ENCODE measurements at regions of chr3 and their contacts with region 1.

Region 1: GRCh38 chr3:118884748-118885206 is 149.9 kb downstream of the IGSF11 start:
- DNase-seq: peak; percentile 50 to 85 (median 76)
- ATAC-seq: peak; percentile 86
- H3K4me3 ChIP-seq: no peak overlapping the region
- H3K4me3 Mint-ChIP-seq: no peak overlapping the region
- H3K27ac ChIP-seq: no peak overlapping the region
- H3K27ac Mint-ChIP-seq: no peak overlapping the region
- H3K4me1 ChIP-seq: no peaks in the 10 kb centered on the region
- H3K4me1 Mint-ChIP-seq: peaks cover 7% of the 10 kb centered on the region
- H3K27me3 ChIP-seq: peaks cover 0 to 3% of the 10 kb centered on the region in 2 experiments
- H3K27me3 Mint-ChIP-seq: peaks cover 21% of the 10 kb centered on the region
- CTCF ChIP-seq: peak; percentile 99

Region 2: GRCh38 chr3:118828351-118828750 is 56.4 kb before region 1 on chr3:
- CTCF ChIA-PET with region 1: no interaction called
- POLR2A ChIA-PET with region 1: no interaction called
- intact Hi-C with region 1: no loop called
- DNase-seq: no peak
- ATAC-seq: no peak
- H3K4me3 ChIP-seq: no peak overlapping the region
- H3K4me3 Mint-ChIP-seq: no peak overlapping the region
- H3K27ac ChIP-seq: no peak overlapping the region
- H3K27ac Mint-ChIP-seq: no peak overlapping the region
- H3K4me1 ChIP-seq: no peaks in the 10 kb centered on the region
- H3K4me1 Mint-ChIP-seq: no peaks in the 10 kb centered on the region
- H3K27me3 ChIP-seq: no peaks in the 10 kb centered on the region
- H3K27me3 Mint-ChIP-seq: peaks cover 8% of the 10 kb centered on the region
- CTCF ChIP-seq: no peak

Region 3: GRCh38 chr3:118868051-118868450 is 16.7 kb before region 1 on chr3:
- CTCF ChIA-PET with region 1: interaction called, 58 read pairs
- POLR2A ChIA-PET with region 1: no interaction called
- intact Hi-C with region 1: no loop called
- DNase-seq: no peak
- ATAC-seq: no peak
- H3K4me3 ChIP-seq: no peak overlapping the region
- H3K4me3 Mint-ChIP-seq: no peak overlapping the region
- H3K27ac ChIP-seq: no peak overlapping the region
- H3K27ac Mint-ChIP-seq: no peak overlapping the region
- H3K4me1 ChIP-seq: no peaks in the 10 kb centered on the region
- H3K4me1 Mint-ChIP-seq: no peaks in the 10 kb centered on the region
- H3K27me3 ChIP-seq: no peaks in the 10 kb centered on the region
- H3K27me3 Mint-ChIP-seq: peaks cover 25% of the 10 kb centered on the region
- CTCF ChIP-seq: no peak

Region 4: GRCh38 chr3:118949113-118949760 is 64.5 kb after region 1 on chr3:
- CTCF ChIA-PET with region 1: interaction called, 16 read pairs
- POLR2A ChIA-PET with region 1: no interaction called
- intact Hi-C with region 1: loop called in 1 of 2 experiments (anchors 10 kb)
- DNase-seq: peak in 2 of 9 experiments; percentile 34 to 55
- ATAC-seq: peak; percentile 77
- H3K4me3 ChIP-seq: no peak overlapping the region
- H3K4me3 Mint-ChIP-seq: peak overlapping the region; percentile 45
- H3K27ac ChIP-seq: no peak overlapping the region
- H3K27ac Mint-ChIP-seq: peak overlapping the region; percentile 85
- H3K4me1 ChIP-seq: peaks cover 31% of the 10 kb centered on the region
- H3K4me1 Mint-ChIP-seq: peaks cover 55% of the 10 kb centered on the region
- H3K27me3 ChIP-seq: no peaks in the 10 kb centered on the region
- H3K27me3 Mint-ChIP-seq: no peaks in the 10 kb centered on the region
- CTCF ChIP-seq: no peak

Region 5: DNA sequence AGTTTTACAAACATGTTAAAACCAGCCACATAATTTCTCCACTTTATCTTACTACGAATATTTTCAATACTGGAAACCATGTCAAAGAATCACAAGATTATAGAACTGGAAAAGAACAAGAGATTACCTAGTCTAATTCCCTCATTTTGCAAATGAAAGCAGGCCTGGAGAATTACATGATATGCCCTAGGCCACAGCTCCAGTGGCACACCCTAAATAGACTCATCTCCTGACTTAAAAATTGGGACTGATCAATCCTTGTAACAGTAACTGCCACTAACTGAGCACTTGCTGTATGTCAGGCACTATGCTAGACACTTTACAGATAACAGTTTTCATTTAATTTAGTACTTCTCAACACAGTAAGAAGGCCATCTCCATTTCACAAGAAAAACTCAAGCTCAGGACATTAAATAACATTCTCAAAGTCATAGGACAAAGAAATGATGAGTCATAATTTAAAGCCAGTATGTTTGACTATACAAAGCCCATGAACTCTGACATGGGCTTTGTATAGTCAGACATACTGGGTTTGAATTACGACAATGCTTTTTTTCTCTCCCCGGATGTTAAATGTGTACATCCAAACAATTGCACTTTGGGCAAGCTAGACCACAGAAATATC is 140.5 kb after region 1 on chr3:
- CTCF ChIA-PET with region 1: interaction called, 46 read pairs
- POLR2A ChIA-PET with region 1: no interaction called
- intact Hi-C with region 1: no loop called
- DNase-seq: no peak
- ATAC-seq: no peak
- H3K4me3 ChIP-seq: no peak overlapping the region
- H3K4me3 Mint-ChIP-seq: no peak overlapping the region
- H3K27ac ChIP-seq: no peak overlapping the region
- H3K27ac Mint-ChIP-seq: no peak overlapping the region
- H3K4me1 ChIP-seq: no peaks in the 10 kb centered on the region
- H3K4me1 Mint-ChIP-seq: peaks cover 4% of the 10 kb centered on the region
- H3K27me3 ChIP-seq: no peaks in the 10 kb centered on the region
- H3K27me3 Mint-ChIP-seq: no peaks in the 10 kb centered on the region
- CTCF ChIP-seq: no peak

Region 6: DNA sequence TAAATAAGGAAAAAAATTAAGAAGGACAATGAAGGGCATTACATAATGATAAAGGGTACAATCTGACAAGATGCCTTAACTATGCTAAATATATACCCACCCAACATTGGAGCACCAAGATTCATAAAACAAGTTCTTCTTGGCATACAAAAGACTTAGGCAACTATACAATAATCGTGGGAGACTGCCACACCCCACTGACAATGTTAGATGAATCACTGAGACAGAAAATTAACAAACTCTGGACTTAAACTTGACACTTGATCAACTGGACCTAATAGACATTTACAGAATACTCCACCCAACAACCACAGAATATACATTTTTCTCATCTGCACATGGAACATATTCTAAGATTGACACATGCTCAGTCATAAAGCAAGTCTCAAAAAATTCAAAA is 203.0 kb after region 1 on chr3:
- CTCF ChIA-PET with region 1: interaction called, 310 read pairs
- POLR2A ChIA-PET with region 1: no interaction called
- intact Hi-C with region 1: no loop called
- DNase-seq: no peak
- ATAC-seq: no peak
- H3K4me3 ChIP-seq: no peak overlapping the region
- H3K4me3 Mint-ChIP-seq: no peak overlapping the region
- H3K27ac ChIP-seq: no peak overlapping the region
- H3K27ac Mint-ChIP-seq: no peak overlapping the region
- H3K4me1 ChIP-seq: no peaks in the 10 kb centered on the region
- H3K4me1 Mint-ChIP-seq: no peaks in the 10 kb centered on the region
- H3K27me3 ChIP-seq: no peaks in the 10 kb centered on the region
- H3K27me3 Mint-ChIP-seq: peaks cover 11% of the 10 kb centered on the region
- CTCF ChIP-seq: no peak

Region 7: GRCh38 chr3:119240591-119241434 is 356.0 kb after region 1 on chr3 and contains the start of gene B4GALT4:
- CTCF ChIA-PET with region 1: interaction called, 34 read pairs
- POLR2A ChIA-PET with region 1: interaction called, 4 read pairs
- intact Hi-C with region 1: loop called (anchors 1 to 2 kb)
- DNase-seq: peak; percentile 34 to 83 (median 63)
- ATAC-seq: peak; percentile 67
- H3K4me3 ChIP-seq: peak within 1 kb of the TSS; percentile 66 to 72
- H3K4me3 Mint-ChIP-seq: peak within 1 kb of the TSS; percentile 88
- H3K27ac ChIP-seq: peak within 1 kb of the TSS; percentile 58 to 67
- H3K27ac Mint-ChIP-seq: peak within 1 kb of the TSS; percentile 92
- H3K4me1 ChIP-seq: peaks cover 30% of the 10 kb centered on the region
- H3K4me1 Mint-ChIP-seq: peaks cover 40% of the 10 kb centered on the region
- H3K27me3 ChIP-seq: no peaks in the 10 kb centered on the region
- H3K27me3 Mint-ChIP-seq: no peaks in the 10 kb centered on the region
- CTCF ChIP-seq: no peak
- total RNA-seq, gene B4GALT4: 18.2 to 18.6 TPM

Region 8: GRCh38 chr3:119676771-119677640 is 792.2 kb after region 1 on chr3 and contains the start of gene COX17:
- CTCF ChIA-PET with region 1: interaction called, 6 read pairs
- POLR2A ChIA-PET with region 1: no interaction called
- intact Hi-C with region 1: loop called in 1 of 2 experiments (anchors 2 kb)
- DNase-seq: peak; percentile 92 to 99 (median 96)
- ATAC-seq: peak; percentile 86
- H3K4me3 ChIP-seq: peak within 1 kb of the TSS; percentile 26 to 79
- H3K4me3 Mint-ChIP-seq: peak within 1 kb of the TSS; percentile 87
- H3K27ac ChIP-seq: peak within 1 kb of the TSS; percentile 49 to 95
- H3K27ac Mint-ChIP-seq: peak within 1 kb of the TSS; percentile 96
- H3K4me1 ChIP-seq: peaks cover 20% of the 10 kb centered on the region
- H3K4me1 Mint-ChIP-seq: peaks cover 35% of the 10 kb centered on the region
- H3K27me3 ChIP-seq: no peaks in the 10 kb centered on the region
- H3K27me3 Mint-ChIP-seq: no peaks in the 10 kb centered on the region
- CTCF ChIP-seq: no peak
- total RNA-seq, gene COX17: 22.4 to 23.2 TPM

Measured in CD8-positive, alpha-beta T cell (primary cell).